Naive thymus-derived CD4-positive, alpha-beta T cell (primary cell): ENCODE measurements at regions of chr1 and their contacts with region 1.

Region 1: GRCh38 chr1:160997323-160998038 is 23.5 kb downstream of the F11R start:
- DNase-seq: peak in 8 of 9 donors; percentile 14 to 52 (median 44)
- ATAC-seq: peak; percentile 80
- H3K4me3 ChIP-seq: no peak overlapping the region
- H3K4me3 Mint-ChIP-seq: no peak overlapping the region
- H3K27ac ChIP-seq: no peak overlapping the region
- H3K27ac Mint-ChIP-seq: peak overlapping the region in 8 of 9 donors; percentile 3 to 74 (median 44)
- H3K4me1 ChIP-seq: no peaks in the 10 kb centered on the region
- H3K4me1 Mint-ChIP-seq: peaks cover 6 to 14% (median 11%) of the 10 kb centered on the region in 7 donors
- H3K27me3 ChIP-seq: no peaks in the 10 kb centered on the region
- H3K27me3 Mint-ChIP-seq: no peaks in the 10 kb centered on the region

Region 2: DNA sequence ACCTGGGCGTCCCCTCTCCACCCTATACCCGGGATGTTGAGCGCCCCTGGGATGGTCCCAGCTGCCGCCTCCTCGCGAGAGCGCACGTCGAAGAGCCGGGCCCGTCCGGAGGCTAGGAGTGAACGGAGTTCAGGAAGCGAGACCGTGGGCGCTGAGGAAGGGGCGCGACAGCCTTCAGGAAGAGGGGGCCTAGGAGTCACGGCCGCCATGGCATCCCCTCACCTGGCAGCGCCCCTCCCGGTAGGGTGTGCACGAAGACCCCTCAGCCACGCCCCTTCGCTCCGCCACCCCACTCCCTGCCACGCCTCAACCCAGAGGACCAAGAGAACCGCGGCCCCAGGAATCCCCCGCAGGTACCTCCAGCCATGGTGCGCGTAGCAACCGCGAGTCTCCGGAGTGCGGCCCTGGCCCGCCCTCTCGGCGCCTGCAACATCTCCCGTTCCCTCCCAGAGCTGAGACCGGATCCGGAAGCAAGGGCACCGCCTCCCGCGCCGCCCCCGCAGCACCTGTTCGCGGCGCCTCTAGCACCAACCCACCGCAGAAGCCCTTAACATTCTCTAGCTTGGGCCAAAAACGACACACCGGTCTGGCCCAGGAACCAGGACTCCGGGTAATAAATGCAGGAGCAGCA is 41.2 kb after region 1 on chr1 and contains the start of gene TSTD1:
- CTCF ChIA-PET with region 1: interaction called, 13 read pairs
- POLR2A ChIA-PET with region 1: no interaction called
- intact Hi-C with region 1: loop called in 1 of 2 experiments (anchors 1 kb)
- DNase-seq: peak; percentile 70 to 90 (median 88)
- ATAC-seq: peak; percentile 95
- H3K4me3 ChIP-seq: peak within 1 kb of the TSS; percentile 95
- H3K4me3 Mint-ChIP-seq: peak within 1 kb of the TSS; percentile 88 to 94 (median 92)
- H3K27ac ChIP-seq: peak within 1 kb of the TSS; percentile 93
- H3K27ac Mint-ChIP-seq: peak within 1 kb of the TSS; percentile 91 to 97 (median 94)
- H3K4me1 ChIP-seq: peaks cover 16 to 32% of the 10 kb centered on the region in 2 donors
- H3K4me1 Mint-ChIP-seq: peaks cover 25 to 57% (median 37%) of the 10 kb centered on the region in 7 donors
- H3K27me3 ChIP-seq: no peaks in the 10 kb centered on the region
- H3K27me3 Mint-ChIP-seq: no peaks in the 10 kb centered on the region
- total RNA-seq, gene TSTD1: 49.8 to 84.0 (median 58.2) TPM

Region 3: DNA sequence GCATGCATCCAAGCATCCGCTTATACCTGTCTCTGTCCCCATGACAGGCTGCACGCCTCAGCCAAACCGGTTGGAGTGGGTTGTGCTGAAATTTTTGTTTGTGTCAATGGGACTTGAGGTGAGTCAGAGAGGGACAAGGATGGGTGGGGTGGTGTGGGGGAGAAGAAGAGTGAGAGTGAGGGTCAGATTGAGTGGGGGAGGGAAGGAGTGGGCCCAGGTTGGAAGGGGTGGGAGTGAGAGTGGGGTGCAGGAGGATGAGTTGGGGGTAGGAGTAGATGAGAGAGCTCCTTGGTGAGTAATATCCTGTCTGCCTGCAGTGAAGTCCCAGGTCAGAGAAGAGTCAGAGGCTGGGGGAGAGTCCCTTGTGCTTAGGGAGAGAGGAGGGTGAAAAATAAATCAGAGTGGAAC is 95.1 kb after region 1 on chr1:
- CTCF ChIA-PET with region 1: interaction called, 123 read pairs
- POLR2A ChIA-PET with region 1: interaction called, 17 read pairs
- intact Hi-C with region 1: loop called (anchors 1 kb)
- DNase-seq: peak in 1 of 9 donors; percentile 65
- ATAC-seq: no peak
- H3K4me3 ChIP-seq: no peak overlapping the region
- H3K4me3 Mint-ChIP-seq: peak overlapping the region in 1 of 10 donors; percentile 1
- H3K27ac ChIP-seq: no peak overlapping the region
- H3K27ac Mint-ChIP-seq: peak overlapping the region in 2 of 9 donors; percentile 25 to 47
- H3K4me1 ChIP-seq: peaks cover 5 to 7% of the 10 kb centered on the region in 2 donors
- H3K4me1 Mint-ChIP-seq: peaks cover 18 to 58% (median 26%) of the 10 kb centered on the region in 7 donors
- H3K27me3 ChIP-seq: no peaks in the 10 kb centered on the region
- H3K27me3 Mint-ChIP-seq: peaks cover 0 to 11% (median 0%) of the 10 kb centered on the region in 5 donors

Region 4: GRCh38 chr1:161139765-161140164 is 142.3 kb after region 1 on chr1:
- CTCF ChIA-PET with region 1: interaction called, 19 read pairs
- POLR2A ChIA-PET with region 1: interaction called, 3 read pairs
- intact Hi-C with region 1: loop called (anchors 1 to 5 kb)
- DNase-seq: peak in 5 of 9 donors; percentile 40 to 58 (median 50)
- ATAC-seq: peak; percentile 73
- H3K4me3 ChIP-seq: no peak overlapping the region
- H3K4me3 Mint-ChIP-seq: no peak overlapping the region
- H3K27ac ChIP-seq: no peak overlapping the region
- H3K27ac Mint-ChIP-seq: peak overlapping the region in 1 of 9 donors; percentile 54
- H3K4me1 ChIP-seq: no peaks in the 10 kb centered on the region
- H3K4me1 Mint-ChIP-seq: peaks cover 4 to 17% (median 10%) of the 10 kb centered on the region in 7 donors
- H3K27me3 ChIP-seq: no peaks in the 10 kb centered on the region
- H3K27me3 Mint-ChIP-seq: no peaks in the 10 kb centered on the region